BJ (cell line): ENCODE measurements at regions of chr1 and their contacts with region 1.

Region 1: GRCh38 chr1:181033799-181034451 is at the start of gene MR1:
- DNase-seq: peak; percentile 83
- H3K4me3 ChIP-seq: peak within 1 kb of the TSS; percentile 47
- H3K27me3 ChIP-seq: no peaks in the 10 kb centered on the region
- CTCF ChIP-seq: no peak
- polyA plus RNA-seq, gene MR1: 25.0 and 36.2 TPM in 2 replicates

Region 2: DNA sequence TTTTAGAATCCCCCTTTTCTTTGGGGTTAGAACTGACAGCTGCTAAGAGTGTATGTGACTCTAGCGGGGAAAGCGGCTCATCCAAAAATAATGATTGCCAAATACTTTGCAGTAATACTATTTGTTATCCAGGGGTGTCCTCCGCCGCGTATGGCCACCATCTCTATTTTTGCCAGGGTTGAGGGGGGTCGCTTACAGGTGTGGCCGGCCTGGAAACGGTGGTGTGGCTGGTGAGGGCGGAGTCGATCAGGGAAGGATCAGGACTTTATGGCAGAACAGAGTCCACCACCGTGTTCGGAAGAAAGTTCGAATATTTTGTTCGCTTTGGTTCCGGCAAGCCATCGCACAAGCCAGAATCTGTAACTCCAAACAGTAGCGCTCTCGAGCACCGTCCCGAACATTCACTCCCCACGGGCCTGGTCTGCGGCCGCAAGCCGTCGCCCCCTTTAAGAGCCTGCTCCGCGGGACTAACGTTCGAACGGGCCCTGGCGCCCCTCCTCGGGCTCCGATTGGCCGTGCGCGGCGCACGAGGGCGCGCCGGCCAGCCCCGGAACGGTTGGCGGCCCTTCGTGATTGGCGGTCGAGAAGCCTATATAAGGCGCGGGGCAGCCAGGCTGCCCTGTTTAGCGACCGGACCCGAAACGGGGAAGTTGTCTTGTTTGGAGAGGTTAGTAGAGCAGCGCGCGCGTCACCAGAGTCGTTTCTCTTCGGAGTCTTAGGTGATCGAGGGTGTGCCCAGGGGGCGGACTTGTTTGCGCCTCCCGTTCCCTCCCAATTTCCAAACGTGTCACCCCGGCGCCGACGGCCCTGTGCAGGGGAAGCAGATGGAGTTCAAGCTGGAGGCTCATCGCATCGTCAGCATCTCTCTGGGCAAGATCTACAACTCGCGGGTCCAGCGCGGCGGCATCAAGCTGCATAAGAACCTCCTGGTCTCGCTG is 54.4 kb after region 1 on chr1 and contains the start of gene IER5:
- CTCF ChIA-PET with region 1: interaction called, 15 read pairs
- POLR2A ChIA-PET with region 1: no interaction called
- DNase-seq: peak; percentile 76
- H3K4me3 ChIP-seq: peak within 1 kb of the TSS; percentile 84
- H3K27me3 ChIP-seq: no peaks in the 10 kb centered on the region
- CTCF ChIP-seq: no peak
- polyA plus RNA-seq, gene IER5: 16.0 and 16.9 TPM in 2 replicates